Cardiac septum (tissue), 1 donor: ENCODE measurements at regions of chr17 and their contacts with region 1.

Region 1: GRCh38 chr17:41648411-41649195 is 24.2 kb upstream of the KRT17 start:
- DNase-seq: peak; percentile 92

Region 2: DNA sequence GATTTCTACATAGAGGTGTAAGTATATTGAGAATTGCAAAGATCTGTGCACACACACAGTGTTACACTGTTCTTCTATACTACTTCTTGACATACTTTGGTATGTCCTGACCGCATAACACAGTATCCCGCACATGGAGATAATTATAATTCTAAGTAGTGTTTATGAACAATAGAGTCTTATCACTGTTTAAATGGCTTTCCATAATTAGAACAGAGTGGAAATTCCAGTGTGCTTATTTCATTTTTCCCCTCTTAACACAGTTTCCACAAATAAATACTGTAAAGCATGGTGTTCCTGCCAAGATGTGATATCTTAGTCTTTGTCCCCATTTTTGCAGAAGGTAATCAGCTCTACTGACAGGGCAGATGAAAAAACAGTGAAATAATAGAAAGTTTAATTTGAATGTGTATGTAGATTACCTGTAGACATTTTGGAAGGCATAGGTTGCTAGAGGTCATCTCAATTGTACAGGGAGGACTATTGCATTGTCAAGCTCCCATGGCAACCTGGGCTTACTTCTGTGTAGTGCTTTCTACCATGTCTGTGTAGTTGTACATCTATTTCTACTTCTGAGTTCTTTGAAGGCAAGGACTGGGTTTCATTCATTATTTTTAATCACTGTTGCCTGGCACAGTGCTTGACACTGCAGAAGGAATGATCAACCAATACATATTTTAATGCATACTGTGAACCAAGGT is 838.7 kb before region 1 on chr17:
- intact Hi-C with region 1: loop called (anchors 5 kb)
- DNase-seq: no peak

Region 3: DNA sequence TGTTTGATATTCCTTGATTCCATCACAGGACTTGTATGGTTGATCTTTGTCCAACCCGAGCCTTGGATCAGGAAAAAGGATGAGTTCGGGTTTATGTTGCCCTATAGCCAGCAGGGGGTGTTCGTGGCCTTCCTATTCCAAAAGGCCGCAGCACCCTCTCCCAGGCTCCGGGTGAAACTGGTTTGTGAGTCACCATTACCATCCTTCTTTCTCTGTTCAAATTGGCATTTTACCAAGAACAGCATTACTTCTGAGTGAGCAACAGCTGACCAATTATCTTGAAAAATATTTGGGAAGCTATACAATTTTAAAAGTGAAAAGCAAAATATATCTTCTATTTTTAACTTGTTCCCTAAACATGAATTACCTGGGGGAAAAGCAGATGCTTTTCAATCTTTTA is 739.3 kb before region 1 on chr17:
- intact Hi-C with region 1: loop called (anchors 2 kb)
- DNase-seq: peak; percentile 82

Region 4: GRCh38 chr17:41548844-41549595 is 99.6 kb before region 1 on chr17:
- intact Hi-C with region 1: loop called (anchors 1 kb)
- DNase-seq: peak; percentile 94

Region 5: DNA sequence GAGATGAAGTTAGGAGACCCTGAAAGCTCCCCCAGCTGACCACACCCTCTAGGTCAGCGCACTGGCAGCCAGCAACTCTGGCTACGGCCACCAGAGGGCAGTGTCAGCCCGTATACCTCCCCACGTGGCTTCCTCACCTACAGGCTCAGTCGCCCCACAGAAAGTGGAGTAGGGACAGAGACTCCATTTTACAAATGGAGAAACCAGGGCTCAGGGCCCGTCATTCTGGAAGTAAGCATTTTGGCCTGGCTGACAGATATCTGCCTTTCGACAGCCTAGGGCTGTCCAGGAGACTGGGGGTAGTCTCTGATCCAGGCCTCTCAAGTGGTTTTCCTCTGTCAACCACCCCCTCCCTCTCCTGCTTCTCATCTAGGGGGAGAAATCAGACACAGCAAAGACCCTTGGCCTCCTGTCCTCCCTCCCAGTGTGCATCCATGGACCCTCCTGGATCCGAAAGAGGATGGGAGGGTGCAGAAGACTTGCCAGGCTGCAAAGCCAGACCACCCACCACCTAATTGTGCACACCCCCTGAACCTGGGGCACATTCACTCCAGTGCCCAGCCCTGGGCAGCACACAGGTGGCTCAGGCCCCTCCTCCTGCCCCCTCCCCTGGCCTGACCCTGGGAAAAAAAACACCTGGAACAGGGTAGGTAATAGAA is 89.6 kb after region 1 on chr17:
- intact Hi-C with region 1: no loop called
- DNase-seq: peak; percentile 92